ENCODE measurements at regions of chr2 and their contacts with region 1.

Region 1: DNA sequence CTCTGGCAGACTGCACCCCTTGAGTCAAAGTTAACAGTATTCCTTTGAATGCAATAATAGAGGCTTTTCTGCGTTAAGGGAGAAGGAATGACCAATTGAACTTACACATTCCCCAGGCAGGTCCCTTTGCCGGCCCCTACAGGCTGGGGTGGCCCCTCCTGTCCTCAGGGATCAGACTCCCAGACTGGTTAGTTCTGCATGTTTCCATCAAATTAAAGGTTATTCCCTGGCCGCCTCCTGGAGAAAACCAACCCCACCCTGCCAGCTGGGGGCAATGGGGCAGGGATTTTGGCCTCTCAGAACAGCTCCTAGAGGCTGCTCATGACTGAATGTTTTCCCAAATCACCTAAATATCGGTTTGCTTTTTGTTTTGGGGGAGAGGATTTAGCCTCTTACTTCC is 199.6 kb downstream of the MGAT5 start:
- DNase-seq: no peak
- H3K4me3 Mint-ChIP-seq: no peak overlapping the region
- H3K27ac Mint-ChIP-seq: no peak overlapping the region
- H3K4me1 Mint-ChIP-seq: peaks cover 5% of the 10 kb centered on the region
- H3K27me3 Mint-ChIP-seq: no peaks in the 10 kb centered on the region
- CTCF ChIP-seq: no peak

Region 2: GRCh38 chr2:133844214-133844892 is 609.1 kb before region 1 on chr2:
- CTCF ChIA-PET with region 1: interaction called, 12 read pairs
- POLR2A ChIA-PET with region 1: no interaction called
- intact Hi-C with region 1: no loop called
- DNase-seq: peak; percentile 84
- H3K4me3 Mint-ChIP-seq: no peak overlapping the region
- H3K27ac Mint-ChIP-seq: no peak overlapping the region
- H3K4me1 Mint-ChIP-seq: peaks cover 15% of the 10 kb centered on the region
- H3K27me3 Mint-ChIP-seq: no peaks in the 10 kb centered on the region
- CTCF ChIP-seq: peak; percentile 90

Region 3: GRCh38 chr2:134359367-134360081 is 94.0 kb before region 1 on chr2:
- CTCF ChIA-PET with region 1: interaction called, 10 read pairs
- POLR2A ChIA-PET with region 1: no interaction called
- intact Hi-C with region 1: no loop called
- DNase-seq: no peak
- H3K4me3 Mint-ChIP-seq: no peak overlapping the region
- H3K27ac Mint-ChIP-seq: no peak overlapping the region
- H3K4me1 Mint-ChIP-seq: no peaks in the 10 kb centered on the region
- H3K27me3 Mint-ChIP-seq: no peaks in the 10 kb centered on the region
- CTCF ChIP-seq: no peak

Region 4: DNA sequence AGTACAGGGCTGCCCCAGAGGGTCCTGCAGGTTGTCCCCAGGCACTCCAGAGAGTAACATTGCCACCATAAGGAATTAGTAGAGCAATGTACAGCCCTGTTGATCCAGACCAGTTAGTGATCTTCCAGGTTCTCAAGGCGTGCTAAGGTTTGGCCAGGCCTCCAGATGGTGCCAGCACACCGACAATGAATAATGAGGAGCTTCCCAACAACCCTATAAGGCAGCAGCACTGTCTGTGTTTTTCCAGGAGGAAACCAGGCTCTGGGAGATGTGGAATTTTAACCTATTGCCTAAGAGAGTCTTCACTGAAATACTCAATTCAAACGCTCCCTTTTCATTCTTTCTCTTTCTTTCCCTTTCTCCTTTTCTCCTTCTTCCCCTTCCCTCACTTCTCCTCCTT is 77.5 kb before region 1 on chr2:
- CTCF ChIA-PET with region 1: interaction called, 105 read pairs
- POLR2A ChIA-PET with region 1: interaction called, 5 read pairs
- intact Hi-C with region 1: loop called (anchors 1 kb)
- DNase-seq: peak; percentile 52
- H3K4me3 Mint-ChIP-seq: no peak overlapping the region
- H3K27ac Mint-ChIP-seq: no peak overlapping the region
- H3K4me1 Mint-ChIP-seq: peaks cover 34% of the 10 kb centered on the region
- H3K27me3 Mint-ChIP-seq: no peaks in the 10 kb centered on the region
- CTCF ChIP-seq: peak; percentile 22

Region 5: DNA sequence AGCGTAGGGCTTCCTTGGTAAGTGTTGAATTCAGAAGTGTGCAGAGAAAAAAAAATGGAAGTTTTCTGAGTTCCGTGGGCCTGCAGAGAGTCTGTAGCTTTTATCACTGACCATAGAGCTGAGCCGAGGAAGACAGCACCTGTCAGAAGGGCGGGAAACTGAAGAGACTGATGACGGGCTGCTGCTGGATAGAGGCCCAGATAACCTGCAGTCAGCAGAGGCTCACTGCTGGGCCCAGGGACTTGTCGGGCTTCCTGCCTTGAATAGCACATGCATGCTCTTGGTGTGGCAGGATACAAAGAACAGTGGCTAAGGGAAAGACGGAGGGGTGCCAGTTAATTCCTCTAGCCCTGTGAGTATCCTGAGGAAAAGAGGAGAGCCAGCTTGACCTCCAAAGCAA is 33.2 kb before region 1 on chr2:
- CTCF ChIA-PET with region 1: interaction called, 52 read pairs
- POLR2A ChIA-PET with region 1: no interaction called
- intact Hi-C with region 1: no loop called
- DNase-seq: no peak
- H3K4me3 Mint-ChIP-seq: no peak overlapping the region
- H3K27ac Mint-ChIP-seq: no peak overlapping the region
- H3K4me1 Mint-ChIP-seq: no peaks in the 10 kb centered on the region
- H3K27me3 Mint-ChIP-seq: no peaks in the 10 kb centered on the region
- CTCF ChIP-seq: no peak

Region 6: DNA sequence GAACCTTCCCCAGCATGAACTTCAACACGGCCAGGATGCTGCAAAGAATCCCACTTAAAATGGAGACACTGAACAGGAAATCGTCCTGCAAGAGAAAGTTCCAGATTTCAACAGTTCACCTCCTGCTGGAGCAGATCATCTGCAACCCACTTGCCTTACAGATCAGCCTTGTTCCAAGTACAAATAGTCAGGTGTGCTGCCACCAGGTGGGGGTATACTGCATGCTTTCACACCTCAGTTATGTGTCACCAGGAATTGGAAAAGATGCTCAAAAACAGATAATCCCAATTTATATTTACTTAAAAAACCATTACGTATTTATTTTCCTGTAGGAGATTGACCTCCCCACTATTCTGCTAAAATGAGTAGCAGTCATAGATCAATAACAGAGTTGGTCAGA is 12.7 kb after region 1 on chr2:
- CTCF ChIA-PET with region 1: interaction called, 35 read pairs
- POLR2A ChIA-PET with region 1: no interaction called
- intact Hi-C with region 1: no loop called
- DNase-seq: peak; percentile 53
- H3K4me3 Mint-ChIP-seq: no peak overlapping the region
- H3K27ac Mint-ChIP-seq: no peak overlapping the region
- H3K4me1 Mint-ChIP-seq: peaks cover 5% of the 10 kb centered on the region
- H3K27me3 Mint-ChIP-seq: no peaks in the 10 kb centered on the region
- CTCF ChIP-seq: peak; percentile 23

Region 7: GRCh38 chr2:134897932-134898331 is 444.5 kb after region 1 on chr2:
- CTCF ChIA-PET with region 1: interaction called, 31 read pairs
- POLR2A ChIA-PET with region 1: no interaction called
- intact Hi-C with region 1: no loop called
- DNase-seq: peak; percentile 6
- H3K4me3 Mint-ChIP-seq: no peak overlapping the region
- H3K27ac Mint-ChIP-seq: no peak overlapping the region
- H3K4me1 Mint-ChIP-seq: peaks cover 4% of the 10 kb centered on the region
- H3K27me3 Mint-ChIP-seq: no peaks in the 10 kb centered on the region
- CTCF ChIP-seq: peak; percentile 35

Measured in MCF 10A (cell line).